ENCODE measurements at regions of chr19 and their contacts with region 1.

Region 1: GRCh38 chr19:56121180-56122167 is at the start of gene ZNF787:
- DNase-seq: peak; percentile 97
- H3K4me3 ChIP-seq: peak within 1 kb of the TSS; percentile 76 to 83 (median 81)
- H3K27ac ChIP-seq: peak within 1 kb of the TSS; percentile 78
- H3K4me1 ChIP-seq: peaks cover 14% of the 10 kb centered on the region
- H3K27me3 ChIP-seq: no peaks in the 10 kb centered on the region
- CTCF ChIP-seq: no peak
- total RNA-seq, gene ZNF787: 25.5 to 41.0 TPM

Region 2: GRCh38 chr19:56091751-56092501 is 29.5 kb before region 1 on chr19:
- CTCF ChIA-PET with region 1: no interaction called
- dilution Hi-C with region 1: no loop called
- in situ Hi-C with region 1: no loop called
- intact Hi-C with region 1: loop called (anchors 2 kb)
- DNase-seq: peak; percentile 89
- H3K4me3 ChIP-seq: peak overlapping the region; percentile 46 to 74 (median 67)
- H3K27ac ChIP-seq: peak overlapping the region; percentile 92
- H3K4me1 ChIP-seq: peaks cover 28% of the 10 kb centered on the region
- H3K27me3 ChIP-seq: no peaks in the 10 kb centered on the region
- CTCF ChIP-seq: no peak

Region 3: GRCh38 chr19:56140583-56141416 is 19.3 kb after region 1 on chr19 and contains the start of gene ZNF444:
- CTCF ChIA-PET with region 1: no interaction called
- dilution Hi-C with region 1: no loop called
- in situ Hi-C with region 1: no loop called
- intact Hi-C with region 1: loop called (anchors 1 kb)
- DNase-seq: peak; percentile 98
- H3K4me3 ChIP-seq: peak within 1 kb of the TSS; percentile 59 to 73 (median 63)
- H3K27ac ChIP-seq: peak within 1 kb of the TSS; percentile 77
- H3K4me1 ChIP-seq: peaks cover 17% of the 10 kb centered on the region
- H3K27me3 ChIP-seq: no peaks in the 10 kb centered on the region
- CTCF ChIP-seq: no peak
- total RNA-seq, gene ZNF444: 12.7 to 29.0 TPM